PC-9 (cell line): ENCODE measurements at regions of chr4 and their contacts with region 1.

Region 1: DNA sequence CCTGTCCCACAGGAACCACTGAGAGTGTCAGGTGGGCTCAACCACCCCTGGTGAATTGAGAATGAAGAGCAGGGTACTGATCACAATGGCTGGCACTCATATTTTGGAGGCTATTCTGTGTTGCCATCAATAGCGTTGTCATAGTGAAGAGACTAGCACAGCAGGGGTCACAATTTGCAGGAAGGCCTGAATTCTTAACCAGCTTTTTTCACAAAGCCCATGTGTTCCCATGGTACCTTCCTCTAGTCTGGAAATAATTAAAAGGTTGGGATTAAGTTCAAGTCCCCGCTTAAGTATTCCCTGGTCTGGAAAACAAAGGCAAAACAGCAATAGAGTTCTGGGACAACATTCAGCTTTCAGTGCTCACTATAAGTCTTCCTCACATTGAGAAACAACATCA is 1051.7 kb downstream of the C4orf33 start:
- DNase-seq: no peak
- H3K4me3 ChIP-seq: no peak overlapping the region
- H3K27ac ChIP-seq: no peak overlapping the region
- H3K4me1 ChIP-seq: no peaks in the 10 kb centered on the region
- H3K27me3 ChIP-seq: no peaks in the 10 kb centered on the region
- CTCF ChIP-seq: no peak

Region 2: DNA sequence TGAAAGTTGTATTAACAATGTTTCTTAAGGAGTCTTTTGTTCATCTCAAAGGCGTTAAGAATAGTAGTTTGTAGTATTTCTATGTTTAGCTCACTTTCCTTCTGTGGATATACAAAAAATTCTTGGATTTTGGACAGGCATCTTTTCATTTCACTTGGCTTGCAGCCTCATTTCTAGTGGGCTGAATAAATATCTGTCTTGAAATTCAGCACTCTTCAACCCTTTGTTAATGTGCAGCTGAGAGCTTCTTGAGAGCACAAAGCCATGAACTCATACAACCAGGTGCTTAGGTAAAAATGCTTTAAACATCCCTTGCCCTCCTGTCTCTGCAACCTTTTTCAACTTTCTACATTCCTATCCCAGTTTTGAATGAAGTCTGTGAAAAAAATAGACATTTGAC is 48.5 kb before region 1 on chr4:
- CTCF ChIA-PET with region 1: no interaction called
- POLR2A ChIA-PET with region 1: no interaction called
- intact Hi-C with region 1: loop called (anchors 1 kb)
- DNase-seq: no peak
- H3K4me3 ChIP-seq: no peak overlapping the region
- H3K27ac ChIP-seq: no peak overlapping the region
- H3K4me1 ChIP-seq: no peaks in the 10 kb centered on the region
- H3K27me3 ChIP-seq: no peaks in the 10 kb centered on the region
- CTCF ChIP-seq: no peak

Region 3: GRCh38 chr4:130197625-130198345 is 50.1 kb after region 1 on chr4:
- CTCF ChIA-PET with region 1: no interaction called
- POLR2A ChIA-PET with region 1: no interaction called
- intact Hi-C with region 1: no loop called
- DNase-seq: no peak
- H3K4me3 ChIP-seq: no peak overlapping the region
- H3K27ac ChIP-seq: no peak overlapping the region
- H3K4me1 ChIP-seq: no peaks in the 10 kb centered on the region
- H3K27me3 ChIP-seq: no peaks in the 10 kb centered on the region
- CTCF ChIP-seq: no peak

Region 4: DNA sequence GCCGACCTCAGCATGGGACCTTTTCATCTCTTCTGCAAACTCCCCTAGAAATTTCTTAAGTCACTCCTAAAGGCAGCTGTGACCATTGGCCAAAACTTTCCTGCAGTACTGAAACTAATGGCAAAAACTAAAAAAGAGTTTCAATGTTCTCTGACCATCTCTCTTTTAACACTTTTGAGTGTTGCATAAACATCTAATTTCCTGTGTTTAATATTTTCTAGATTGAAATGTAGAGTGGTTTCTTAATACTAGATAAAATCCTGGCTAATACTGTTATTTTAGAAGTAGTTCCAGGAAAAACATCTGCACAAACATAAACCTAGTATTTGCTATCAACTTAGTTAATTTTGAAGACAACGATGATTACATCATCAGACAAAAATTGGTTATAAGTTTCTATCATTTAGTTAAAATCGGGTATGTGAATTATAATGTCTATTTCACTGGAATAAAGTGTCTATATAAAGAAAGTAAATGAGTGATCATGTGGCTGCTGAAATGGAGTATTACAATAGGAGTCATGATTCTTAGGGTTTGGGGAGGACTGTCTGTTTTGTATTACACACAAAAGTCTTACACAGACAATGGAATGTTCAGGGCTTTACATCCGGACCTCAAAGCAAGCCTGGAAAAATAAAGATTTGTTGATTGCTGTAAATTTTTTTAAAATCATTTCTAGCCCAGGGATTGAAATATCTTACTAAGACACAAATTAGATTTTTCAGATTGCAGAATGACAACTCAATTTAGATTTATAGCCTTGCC is 271.8 kb after region 1 on chr4:
- CTCF ChIA-PET with region 1: no interaction called
- POLR2A ChIA-PET with region 1: no interaction called
- intact Hi-C with region 1: no loop called
- DNase-seq: no peak
- H3K4me3 ChIP-seq: no peak overlapping the region
- H3K27ac ChIP-seq: no peak overlapping the region
- H3K4me1 ChIP-seq: no peaks in the 10 kb centered on the region
- H3K27me3 ChIP-seq: no peaks in the 10 kb centered on the region
- CTCF ChIP-seq: no peak